CD4-positive, alpha-beta T cell (primary cell): ENCODE measurements at regions of chr3 and their contacts with region 1.

Region 1: GRCh38 chr3:50674349-50675178 is at the start of gene DOCK3:
- DNase-seq: peak; percentile 24 to 89 (median 58)
- ATAC-seq: peak; percentile 91
- H3K4me3 ChIP-seq: peak within 1 kb of the TSS; percentile 53
- H3K4me3 Mint-ChIP-seq: peak within 1 kb of the TSS; percentile 87
- H3K27ac ChIP-seq: no peak within 1 kb of the TSS
- H3K27ac Mint-ChIP-seq: no peak within 1 kb of the TSS
- H3K4me1 ChIP-seq: peaks cover 8% of the 10 kb centered on the region
- H3K4me1 Mint-ChIP-seq: peaks cover 6% of the 10 kb centered on the region
- H3K27me3 ChIP-seq: peaks cover 5 to 17% of the 10 kb centered on the region in 2 experiments
- H3K27me3 Mint-ChIP-seq: peaks cover 49% of the 10 kb centered on the region
- CTCF ChIP-seq: no peak
- total RNA-seq, gene DOCK3: 0.93 to 1.1 TPM

Region 2: GRCh38 chr3:50627407-50628051 is 47.0 kb before region 1 on chr3:
- CTCF ChIA-PET with region 1: no interaction called
- POLR2A ChIA-PET with region 1: interaction called, 3 read pairs
- intact Hi-C with region 1: loop called in 1 of 2 experiments (anchors 2 kb)
- DNase-seq: peak in 2 of 14 experiments; percentile 64 to 78
- ATAC-seq: peak; percentile 13
- H3K4me3 ChIP-seq: no peak overlapping the region
- H3K4me3 Mint-ChIP-seq: no peak overlapping the region
- H3K27ac ChIP-seq: no peak overlapping the region
- H3K27ac Mint-ChIP-seq: peak overlapping the region; percentile 70
- H3K4me1 ChIP-seq: peaks cover 99% of the 10 kb centered on the region
- H3K4me1 Mint-ChIP-seq: peaks cover 89% of the 10 kb centered on the region
- H3K27me3 ChIP-seq: no peaks in the 10 kb centered on the region
- H3K27me3 Mint-ChIP-seq: no peaks in the 10 kb centered on the region
- CTCF ChIP-seq: no peak

Region 3: DNA sequence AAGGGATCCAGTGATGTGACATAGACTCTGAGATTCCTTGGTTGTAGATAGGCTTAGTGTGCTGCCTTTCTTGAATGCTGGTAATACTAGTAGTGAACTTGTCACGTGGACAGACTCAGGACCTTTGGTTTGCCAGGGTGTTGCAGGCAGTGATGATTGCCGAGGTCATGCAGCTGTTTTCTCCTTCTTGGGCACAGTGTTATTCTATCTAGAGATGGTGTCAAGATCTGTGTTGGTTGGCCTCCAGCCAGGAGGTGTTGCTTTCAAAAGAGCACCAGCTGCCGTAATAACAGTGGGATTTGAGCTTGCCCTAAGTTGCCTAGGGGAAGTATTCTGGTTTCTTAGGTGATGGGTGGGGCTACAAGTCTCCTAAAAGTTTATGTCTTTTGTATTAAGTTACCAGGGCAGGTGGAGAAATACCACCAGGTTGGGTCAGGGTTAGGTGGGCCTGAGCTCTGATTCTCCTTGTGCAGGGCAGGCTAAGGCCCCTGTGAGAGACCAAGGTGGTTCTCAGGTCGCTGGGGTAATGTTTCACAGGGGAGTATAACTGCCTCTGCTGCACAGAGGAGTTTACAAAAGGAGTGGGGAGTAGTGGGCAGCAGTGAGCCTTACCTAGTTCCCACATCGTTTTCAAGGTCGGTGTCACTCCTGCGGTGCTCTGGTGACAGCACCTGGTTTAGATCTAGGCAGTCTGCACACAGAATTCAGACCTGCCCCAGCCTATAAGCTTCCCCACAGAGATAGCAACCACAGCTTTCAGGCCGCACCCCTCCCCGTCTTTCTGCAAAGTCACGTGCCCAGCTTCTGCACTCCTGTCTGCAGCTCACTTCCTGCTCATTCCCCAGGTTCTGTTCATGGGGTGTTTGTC is 350.4 kb after region 1 on chr3:
- CTCF ChIA-PET with region 1: no interaction called
- POLR2A ChIA-PET with region 1: no interaction called
- intact Hi-C with region 1: no loop called
- DNase-seq: peak; percentile 60 to 92 (median 76)
- ATAC-seq: peak; percentile 96
- H3K4me3 ChIP-seq: peak overlapping the region; percentile 32
- H3K4me3 Mint-ChIP-seq: peak overlapping the region; percentile 74
- H3K27ac ChIP-seq: peak overlapping the region; percentile 69
- H3K27ac Mint-ChIP-seq: peak overlapping the region; percentile 95
- H3K4me1 ChIP-seq: peaks cover 33% of the 10 kb centered on the region
- H3K4me1 Mint-ChIP-seq: peaks cover 66% of the 10 kb centered on the region
- H3K27me3 ChIP-seq: no peaks in the 10 kb centered on the region
- H3K27me3 Mint-ChIP-seq: no peaks in the 10 kb centered on the region
- CTCF ChIP-seq: no peak

Region 4: GRCh38 chr3:51371943-51372557 is 697.5 kb after region 1 on chr3:
- CTCF ChIA-PET with region 1: no interaction called
- POLR2A ChIA-PET with region 1: no interaction called
- intact Hi-C with region 1: loop called in 1 of 2 experiments (anchors 2 kb)
- DNase-seq: peak in 11 of 14 experiments; percentile 27 to 76 (median 42)
- ATAC-seq: peak; percentile 49
- H3K4me3 ChIP-seq: no peak overlapping the region
- H3K4me3 Mint-ChIP-seq: no peak overlapping the region
- H3K27ac ChIP-seq: no peak overlapping the region
- H3K27ac Mint-ChIP-seq: no peak overlapping the region
- H3K4me1 ChIP-seq: no peaks in the 10 kb centered on the region
- H3K4me1 Mint-ChIP-seq: no peaks in the 10 kb centered on the region
- H3K27me3 ChIP-seq: peaks cover 0 to 3% of the 10 kb centered on the region in 2 experiments
- H3K27me3 Mint-ChIP-seq: no peaks in the 10 kb centered on the region
- CTCF ChIP-seq: peak; percentile 65